ENCODE measurements at regions of chr13 and their contacts with region 1.

Region 1: DNA sequence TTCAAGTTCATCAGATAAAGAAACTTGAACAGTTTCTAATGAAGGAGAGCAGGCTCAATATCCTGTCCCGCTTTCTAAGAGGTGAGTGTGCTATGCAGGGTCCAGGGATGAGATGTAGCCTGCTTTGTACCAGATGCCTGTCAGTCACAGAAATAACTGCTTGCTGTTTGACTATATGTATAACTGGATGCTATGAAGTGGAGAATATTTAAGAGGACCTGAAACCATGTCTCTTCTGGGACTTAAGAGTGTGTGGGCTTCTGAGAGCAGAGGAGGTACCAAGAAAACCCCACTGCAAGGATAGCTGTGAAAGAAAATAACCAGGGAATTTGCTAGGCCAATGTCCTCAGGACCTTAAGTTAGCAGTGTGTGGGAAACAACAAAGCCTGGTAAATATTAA is 246.3 kb upstream of the RFC3 start:
- DNase-seq: no peak
- ATAC-seq: no peak
- H3K4me3 ChIP-seq: no peak overlapping the region
- H3K27ac ChIP-seq: no peak overlapping the region
- H3K4me1 ChIP-seq: peaks cover 0 to 2% (median 0%) of the 10 kb centered on the region in 12 donors
- H3K27me3 ChIP-seq: no peaks in the 10 kb centered on the region
- CTCF ChIP-seq: no peak
- POLR2A ChIP-seq: no peak

Region 2: GRCh38 chr13:33560726-33561125 is 10.9 kb before region 1 on chr13:
- intact Hi-C with region 1: loop called in 1 of 10 experiments (anchors 1 kb)
- DNase-seq: no peak
- ATAC-seq: no peak
- H3K4me3 ChIP-seq: no peak overlapping the region
- H3K27ac ChIP-seq: peak overlapping the region in 1 of 12 donors; percentile 18
- H3K4me1 ChIP-seq: peaks cover 0 to 12% (median 4%) of the 10 kb centered on the region in 12 donors
- H3K27me3 ChIP-seq: no peaks in the 10 kb centered on the region
- CTCF ChIP-seq: no peak
- POLR2A ChIP-seq: no peak

Measured in heart left ventricle (tissue), 16 donors.